ENCODE measurements at regions of chr9 and their contacts with region 1.

Region 1: GRCh38 chr9:96363175-96363967 is 20.1 kb downstream of the SLC35D2 start:
- DNase-seq: no peak
- H3K4me3 ChIP-seq: no peak overlapping the region
- H3K27ac ChIP-seq: no peak overlapping the region
- H3K4me1 ChIP-seq: no peaks in the 10 kb centered on the region
- H3K27me3 ChIP-seq: no peaks in the 10 kb centered on the region
- CTCF ChIP-seq: no peak

Region 2: DNA sequence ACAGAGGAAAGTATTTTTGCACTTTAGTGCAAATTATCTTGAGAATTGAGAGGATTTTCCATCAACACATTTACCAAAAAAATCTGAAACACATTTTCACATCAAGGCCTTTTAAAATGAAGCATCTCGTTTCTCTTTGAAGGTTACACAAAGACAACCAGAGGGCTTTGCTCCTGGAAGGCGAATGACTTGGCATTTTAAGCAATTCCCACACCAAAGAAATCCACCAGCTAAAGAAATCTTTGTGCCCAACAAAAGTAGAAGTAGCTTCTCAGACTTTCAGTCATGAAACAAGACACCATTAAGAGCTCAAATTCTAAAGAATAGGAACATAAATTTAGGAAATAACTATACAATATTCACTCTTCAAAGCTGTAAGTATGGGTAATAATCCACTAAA is 146.5 kb after region 1 on chr9:
- CTCF ChIA-PET with region 1: no interaction called
- POLR2A ChIA-PET with region 1: interaction called, 11 read pairs
- intact Hi-C with region 1: no loop called
- DNase-seq: no peak
- H3K4me3 ChIP-seq: no peak overlapping the region
- H3K27ac ChIP-seq: no peak overlapping the region
- H3K4me1 ChIP-seq: no peaks in the 10 kb centered on the region
- H3K27me3 ChIP-seq: no peaks in the 10 kb centered on the region
- CTCF ChIP-seq: no peak

Region 3: DNA sequence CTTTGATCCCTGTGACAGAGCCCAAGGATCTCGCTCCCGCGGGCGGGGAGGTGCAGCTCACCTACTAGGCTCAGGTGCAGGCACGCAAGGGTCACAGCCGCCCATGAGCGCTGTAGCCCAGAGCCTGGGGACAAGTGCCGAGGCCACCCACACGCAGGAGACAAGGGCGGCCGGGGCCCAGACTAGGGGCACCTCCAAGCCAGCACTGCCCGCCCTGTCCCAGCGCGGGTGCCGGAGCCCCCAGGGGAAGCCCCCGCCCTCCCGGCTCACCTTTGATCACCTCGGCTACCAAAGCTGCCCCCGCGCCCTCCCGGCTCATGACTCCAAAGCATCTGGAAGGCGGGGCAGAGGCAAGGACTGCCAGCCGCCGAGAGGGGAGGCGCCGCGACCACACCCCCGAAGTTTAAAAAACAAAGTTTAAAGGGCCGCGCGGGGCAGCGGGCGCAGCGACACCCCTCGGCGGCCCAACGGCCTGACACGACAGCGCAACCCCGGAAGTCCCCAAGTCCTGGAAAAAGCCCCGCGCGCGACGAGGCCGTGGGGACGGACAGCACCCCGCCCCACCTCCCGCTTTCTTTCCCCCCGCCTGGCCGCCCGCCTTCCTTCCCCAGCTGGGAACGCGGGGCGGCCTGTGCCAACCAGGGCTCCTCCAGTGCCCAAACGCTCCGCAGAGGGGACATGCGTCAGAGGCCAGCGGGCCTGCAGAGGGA is 203.3 kb after region 1 on chr9:
- CTCF ChIA-PET with region 1: interaction called, 14 read pairs
- POLR2A ChIA-PET with region 1: no interaction called
- intact Hi-C with region 1: no loop called
- DNase-seq: peak; percentile 75
- H3K4me3 ChIP-seq: peak overlapping the region; percentile 77
- H3K27ac ChIP-seq: peak overlapping the region; percentile 69
- H3K4me1 ChIP-seq: peaks cover 13% of the 10 kb centered on the region
- H3K27me3 ChIP-seq: no peaks in the 10 kb centered on the region
- CTCF ChIP-seq: peak; percentile 72

Region 4: DNA sequence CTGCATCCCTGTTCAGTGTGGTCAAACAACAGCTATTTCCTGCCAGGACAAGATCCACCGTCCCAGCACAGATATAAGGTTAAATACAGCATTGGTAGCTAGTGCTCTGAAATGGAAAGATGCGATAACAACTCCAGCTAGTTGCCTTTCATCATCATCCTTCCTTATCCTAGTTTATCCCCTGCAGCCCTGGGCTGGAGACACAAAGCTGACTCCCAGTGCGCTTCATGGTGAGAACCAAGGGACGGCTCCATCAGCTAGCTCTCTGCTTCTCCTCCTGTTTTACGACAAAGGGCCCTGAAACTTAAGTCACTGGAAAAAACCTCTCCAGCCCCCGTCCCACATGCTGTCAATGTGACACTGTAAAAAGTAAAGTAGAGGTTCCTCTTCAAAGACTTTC is 218.4 kb after region 1 on chr9:
- CTCF ChIA-PET with region 1: no interaction called
- POLR2A ChIA-PET with region 1: no interaction called
- intact Hi-C with region 1: no loop called
- DNase-seq: no peak
- H3K4me3 ChIP-seq: no peak overlapping the region
- H3K27ac ChIP-seq: no peak overlapping the region
- H3K4me1 ChIP-seq: no peaks in the 10 kb centered on the region
- H3K27me3 ChIP-seq: no peaks in the 10 kb centered on the region
- CTCF ChIP-seq: no peak